Brain microvascular endothelial cell (primary cell): ENCODE measurements at regions of chr18 and their contacts with region 1.

Region 1: GRCh38 chr18:32289483-32290075 is 99.7 kb downstream of the MEP1B start:
- DNase-seq: peak; percentile 82
- H3K4me3 ChIP-seq: no peak overlapping the region
- H3K27ac ChIP-seq: no peak overlapping the region
- H3K27me3 ChIP-seq: no peaks in the 10 kb centered on the region
- CTCF ChIP-seq: peak; percentile 82

Region 2: DNA sequence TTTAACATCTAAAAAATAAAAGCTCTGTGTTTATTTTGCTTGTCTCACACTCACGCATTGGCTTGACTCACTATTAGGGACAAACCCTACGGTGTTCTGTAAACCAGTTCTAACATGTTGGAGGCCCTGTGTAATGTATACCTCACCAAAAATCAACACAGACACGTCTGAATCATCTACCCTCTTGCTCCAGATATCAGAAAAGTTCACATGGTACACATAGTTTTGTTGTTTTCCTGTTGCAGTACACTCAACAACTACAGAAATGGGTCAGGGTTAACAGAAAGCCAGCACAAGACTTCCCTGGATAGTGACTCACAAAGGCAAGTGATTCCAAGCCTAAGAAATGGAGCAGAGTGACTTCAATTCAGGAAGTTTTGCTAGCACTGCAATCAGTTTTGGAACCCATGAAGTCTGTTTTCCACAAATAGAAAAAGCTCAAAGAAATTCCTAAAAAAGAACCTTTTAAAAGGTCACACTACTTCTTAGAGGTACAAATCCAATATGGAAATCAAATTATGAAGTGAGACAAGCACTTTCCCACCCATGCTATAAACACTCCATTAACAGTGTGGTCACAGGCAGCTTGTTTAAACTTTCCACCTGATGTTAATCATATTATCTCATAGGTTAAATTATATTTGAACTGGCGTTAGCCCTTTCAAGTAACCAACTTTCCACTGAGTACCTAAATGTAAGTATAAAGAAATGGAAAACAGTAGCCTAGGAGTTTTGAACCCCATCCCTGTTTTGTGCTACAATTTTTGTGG is 93.7 kb after region 1 on chr18:
- in situ Hi-C with region 1: loop called (anchors 25 kb)
- DNase-seq: peak; percentile 96
- H3K4me3 ChIP-seq: no peak overlapping the region
- H3K27ac ChIP-seq: peak overlapping the region; percentile 88
- H3K27me3 ChIP-seq: no peaks in the 10 kb centered on the region
- CTCF ChIP-seq: no peak

Region 3: GRCh38 chr18:32470713-32471633 is 181.4 kb after region 1 on chr18 and contains the start of gene GAREM1:
- in situ Hi-C with region 1: loop called (anchors 25 kb)
- DNase-seq: peak; percentile 97
- H3K4me3 ChIP-seq: peak within 1 kb of the TSS; percentile 70
- H3K27ac ChIP-seq: peak within 1 kb of the TSS; percentile 52
- H3K27me3 ChIP-seq: no peaks in the 10 kb centered on the region
- CTCF ChIP-seq: peak; percentile 65

Region 4: GRCh38 chr18:32576296-32576916 is 286.8 kb after region 1 on chr18:
- in situ Hi-C with region 1: no loop called
- DNase-seq: peak; percentile 8
- H3K4me3 ChIP-seq: no peak overlapping the region
- H3K27ac ChIP-seq: no peak overlapping the region
- H3K27me3 ChIP-seq: no peaks in the 10 kb centered on the region
- CTCF ChIP-seq: peak; percentile 77